Mammary epithelial cell (primary cell): ENCODE measurements at regions of chr7 and their contacts with region 1.

Region 1: DNA sequence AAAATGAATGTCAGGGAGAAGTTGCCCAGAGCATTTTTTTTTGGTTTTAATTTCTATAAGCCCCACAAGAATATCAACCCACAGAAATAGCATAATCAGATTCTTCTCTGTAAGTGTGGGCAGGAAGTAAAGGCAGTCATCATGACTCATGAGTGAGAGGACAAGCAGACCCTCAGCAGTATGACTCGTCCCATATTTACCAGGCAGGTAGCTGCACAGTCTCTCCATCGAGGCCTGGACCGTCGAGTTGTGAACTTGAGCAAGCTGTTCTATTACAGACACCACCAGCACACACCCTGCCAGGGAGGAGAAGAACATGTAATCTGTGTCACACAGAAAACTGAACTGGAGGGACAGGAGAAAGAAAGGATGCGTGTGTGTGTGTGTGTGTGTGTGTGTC is 37.8 kb downstream of the AOAH start:
- DNase-seq: peak; percentile 91
- H3K4me3 ChIP-seq: no peak overlapping the region
- H3K27ac ChIP-seq: peak overlapping the region; percentile 72
- H3K4me1 ChIP-seq: peaks cover 53% of the 10 kb centered on the region
- H3K27me3 ChIP-seq: no peaks in the 10 kb centered on the region
- CTCF ChIP-seq: no peak

Region 2: DNA sequence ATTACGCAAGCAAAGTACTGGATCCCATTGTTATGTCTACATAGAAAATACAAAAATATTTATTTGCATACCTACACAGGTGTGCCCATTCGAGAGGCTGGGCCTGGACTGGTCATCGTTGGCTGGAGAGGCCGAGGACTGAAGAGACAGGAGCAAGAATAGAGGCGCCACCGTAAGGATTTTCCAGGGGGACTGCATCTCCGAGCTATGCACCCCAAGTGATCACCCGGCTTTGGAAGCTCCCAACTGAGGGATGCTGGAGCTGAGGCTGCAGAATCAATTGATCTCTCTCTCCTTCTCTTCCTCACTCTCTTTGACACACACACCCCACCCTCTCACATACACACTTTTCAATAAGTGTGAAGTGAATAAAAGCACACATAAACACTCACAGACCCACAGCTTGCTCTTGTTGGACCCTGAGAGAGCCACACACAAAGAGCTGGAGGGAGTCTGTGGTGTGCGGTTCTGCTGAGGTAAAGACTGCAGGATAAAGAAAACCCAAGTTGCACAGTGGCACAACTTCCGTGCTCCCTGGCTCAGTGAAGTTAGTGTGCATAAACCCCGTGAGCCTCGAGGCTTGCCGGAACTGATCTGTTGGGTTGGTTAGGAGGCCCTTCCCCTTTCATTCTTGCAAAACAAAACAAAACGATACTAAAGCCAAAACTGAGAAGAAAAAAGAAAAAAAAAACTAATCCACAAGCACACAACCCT is 37.6 kb after region 1 on chr7 and contains the start of gene AOAH:
- CTCF ChIA-PET with region 1: no interaction called
- dilution Hi-C with region 1: no loop called
- in situ Hi-C with region 1: no loop called
- intact Hi-C with region 1: no loop called
- DNase-seq: no peak
- H3K4me3 ChIP-seq: no peak within 1 kb of the TSS
- H3K27ac ChIP-seq: no peak within 1 kb of the TSS
- H3K4me1 ChIP-seq: no peaks in the 10 kb centered on the region
- H3K27me3 ChIP-seq: no peaks in the 10 kb centered on the region
- CTCF ChIP-seq: no peak
- total RNA-seq, gene AOAH: 0.33 TPM in 1 of 2 donors, not detected in the other

Region 3: GRCh38 chr7:36852017-36852416 is 165.5 kb after region 1 on chr7:
- CTCF ChIA-PET with region 1: no interaction called
- dilution Hi-C with region 1: no loop called
- in situ Hi-C with region 1: no loop called
- intact Hi-C with region 1: loop called (anchors 10 kb)
- DNase-seq: no peak
- H3K4me3 ChIP-seq: no peak overlapping the region
- H3K27ac ChIP-seq: no peak overlapping the region
- H3K4me1 ChIP-seq: peaks cover 16% of the 10 kb centered on the region
- H3K27me3 ChIP-seq: no peaks in the 10 kb centered on the region
- CTCF ChIP-seq: no peak

Region 4: GRCh38 chr7:36967387-36967786 is 280.9 kb after region 1 on chr7:
- CTCF ChIA-PET with region 1: interaction called, 4 read pairs
- dilution Hi-C with region 1: no loop called
- in situ Hi-C with region 1: no loop called
- intact Hi-C with region 1: loop called (anchors 10 kb)
- DNase-seq: peak; percentile 52
- H3K4me3 ChIP-seq: no peak overlapping the region
- H3K27ac ChIP-seq: no peak overlapping the region
- H3K4me1 ChIP-seq: no peaks in the 10 kb centered on the region
- H3K27me3 ChIP-seq: no peaks in the 10 kb centered on the region
- CTCF ChIP-seq: peak; percentile 74 to 78